Mammary epithelial cell (primary cell): ENCODE measurements at regions of chr19 and their contacts with region 1.

Region 1: GRCh38 chr19:46265217-46265828 is 31.5 kb upstream of the HIF3A start:
- DNase-seq: peak; percentile 70
- H3K4me3 ChIP-seq: no peak overlapping the region
- H3K27ac ChIP-seq: no peak overlapping the region
- H3K4me1 ChIP-seq: peaks cover 10% of the 10 kb centered on the region
- H3K27me3 ChIP-seq: peaks cover 4% of the 10 kb centered on the region
- CTCF ChIP-seq: peak; percentile 80 to 84

Region 2: DNA sequence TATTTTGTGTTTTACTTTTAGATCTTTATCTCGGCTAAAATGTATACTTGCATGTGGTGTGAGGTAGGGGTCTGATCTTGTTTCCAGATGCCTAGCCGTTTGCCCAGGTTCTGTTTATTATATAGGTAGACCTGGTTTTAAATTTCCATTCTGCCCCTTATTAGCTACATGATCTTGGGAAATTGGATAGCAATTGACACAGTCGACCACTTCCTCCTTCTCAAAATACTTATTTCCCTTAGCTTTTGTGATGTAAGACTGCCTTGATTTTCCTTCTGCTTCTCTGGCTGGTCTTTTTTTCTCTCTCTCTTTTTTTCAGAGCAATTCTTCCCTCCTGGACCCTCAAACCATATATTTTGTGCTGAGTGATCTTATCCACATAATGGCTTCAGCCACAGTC is 239.5 kb before region 1 on chr19:
- CTCF ChIA-PET with region 1: interaction called, 4 read pairs
- dilution Hi-C with region 1: no loop called
- in situ Hi-C with region 1: loop called (anchors 5 kb)
- intact Hi-C with region 1: loop called (anchors 1 kb)
- DNase-seq: no peak
- H3K4me3 ChIP-seq: no peak overlapping the region
- H3K27ac ChIP-seq: no peak overlapping the region
- H3K4me1 ChIP-seq: peaks cover 10% of the 10 kb centered on the region
- H3K27me3 ChIP-seq: no peaks in the 10 kb centered on the region
- CTCF ChIP-seq: no peak

Region 3: DNA sequence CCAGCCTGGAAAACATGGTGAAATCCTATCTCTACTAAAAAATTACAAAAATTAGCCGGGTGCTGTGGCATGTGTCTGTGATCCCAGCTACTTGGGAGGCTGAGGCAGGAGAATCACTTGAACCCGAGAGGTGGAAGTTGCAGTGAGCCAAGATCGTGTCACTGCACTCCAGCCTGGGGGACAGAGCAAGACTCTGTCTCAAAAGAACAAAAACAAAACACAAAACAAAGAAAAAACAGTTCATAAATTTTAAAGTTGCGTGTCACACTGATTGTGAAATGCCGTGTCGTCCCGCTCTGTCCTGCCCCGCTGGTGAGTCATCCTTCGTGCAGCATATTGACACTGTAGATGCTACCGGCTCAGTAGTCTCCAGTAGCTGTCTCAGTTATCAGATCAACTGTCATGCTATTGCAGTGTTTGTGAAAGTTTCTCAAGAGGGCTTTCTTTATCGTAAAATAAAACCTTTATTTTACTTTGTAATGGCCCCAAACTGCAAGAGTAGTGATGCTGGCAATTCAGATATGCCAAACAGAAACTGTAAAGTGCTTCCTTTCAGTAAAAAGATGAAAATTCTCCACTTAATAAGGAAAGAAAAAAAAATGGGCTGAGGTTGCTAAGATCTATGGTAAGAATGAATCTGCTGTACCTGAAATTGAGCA is 72.2 kb before region 1 on chr19:
- CTCF ChIA-PET with region 1: interaction called, 3 read pairs
- dilution Hi-C with region 1: no loop called
- in situ Hi-C with region 1: loop called (anchors 5 kb)
- intact Hi-C with region 1: loop called (anchors 1 kb)
- DNase-seq: peak; percentile 86
- H3K4me3 ChIP-seq: no peak overlapping the region
- H3K27ac ChIP-seq: peak overlapping the region; percentile 51
- H3K4me1 ChIP-seq: peaks cover 43% of the 10 kb centered on the region
- H3K27me3 ChIP-seq: no peaks in the 10 kb centered on the region
- CTCF ChIP-seq: no peak